ENCODE measurements at regions of chr6 and their contacts with region 1.

Region 1: GRCh38 chr6:8187209-8187608 is 84.9 kb upstream of the EEF1E1 start:
- DNase-seq: no peak
- H3K4me3 ChIP-seq: no peak overlapping the region
- H3K27ac ChIP-seq: no peak overlapping the region
- H3K4me1 ChIP-seq: no peaks in the 10 kb centered on the region
- H3K27me3 ChIP-seq: no peaks in the 10 kb centered on the region
- CTCF ChIP-seq: no peak
- POLR2A ChIP-seq: no peak

Region 2: DNA sequence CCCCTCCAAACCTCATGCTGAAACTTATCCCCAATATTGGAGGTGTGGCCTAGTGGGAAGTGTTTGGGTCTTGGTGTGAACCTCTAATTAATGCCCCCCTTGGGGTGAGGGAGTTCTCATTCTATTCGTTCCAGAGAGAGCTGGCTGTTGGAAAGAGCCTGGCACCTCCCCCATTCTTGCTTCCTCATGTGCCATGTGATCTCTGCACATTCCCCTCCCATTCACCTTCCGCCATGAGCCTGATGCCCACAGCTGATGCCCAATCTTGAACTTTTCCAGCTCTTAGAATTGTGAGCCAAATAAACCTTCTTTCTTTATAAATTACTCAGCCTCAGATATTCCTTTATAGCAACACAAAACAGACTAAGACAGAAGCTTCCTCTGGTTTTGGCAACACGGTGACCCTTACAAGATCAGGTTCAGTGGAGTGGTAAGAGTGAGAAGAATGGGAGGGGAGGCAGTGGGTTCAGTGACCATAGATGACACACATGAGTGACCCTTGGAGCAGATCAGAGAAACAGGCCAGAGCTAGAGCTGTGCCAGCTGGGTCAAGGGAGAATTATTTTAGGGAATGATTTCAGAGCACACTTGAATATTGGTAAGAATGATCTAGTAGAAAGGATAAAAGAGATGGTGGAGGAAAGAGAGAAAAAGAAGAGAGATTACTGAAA is 1422.3 kb before region 1 on chr6:
- intact Hi-C with region 1: loop called (anchors 5 kb)
- DNase-seq: no peak
- H3K4me3 ChIP-seq: no peak overlapping the region
- H3K27ac ChIP-seq: no peak overlapping the region
- H3K4me1 ChIP-seq: no peaks in the 10 kb centered on the region
- H3K27me3 ChIP-seq: no peaks in the 10 kb centered on the region
- CTCF ChIP-seq: no peak
- POLR2A ChIP-seq: no peak

Region 3: DNA sequence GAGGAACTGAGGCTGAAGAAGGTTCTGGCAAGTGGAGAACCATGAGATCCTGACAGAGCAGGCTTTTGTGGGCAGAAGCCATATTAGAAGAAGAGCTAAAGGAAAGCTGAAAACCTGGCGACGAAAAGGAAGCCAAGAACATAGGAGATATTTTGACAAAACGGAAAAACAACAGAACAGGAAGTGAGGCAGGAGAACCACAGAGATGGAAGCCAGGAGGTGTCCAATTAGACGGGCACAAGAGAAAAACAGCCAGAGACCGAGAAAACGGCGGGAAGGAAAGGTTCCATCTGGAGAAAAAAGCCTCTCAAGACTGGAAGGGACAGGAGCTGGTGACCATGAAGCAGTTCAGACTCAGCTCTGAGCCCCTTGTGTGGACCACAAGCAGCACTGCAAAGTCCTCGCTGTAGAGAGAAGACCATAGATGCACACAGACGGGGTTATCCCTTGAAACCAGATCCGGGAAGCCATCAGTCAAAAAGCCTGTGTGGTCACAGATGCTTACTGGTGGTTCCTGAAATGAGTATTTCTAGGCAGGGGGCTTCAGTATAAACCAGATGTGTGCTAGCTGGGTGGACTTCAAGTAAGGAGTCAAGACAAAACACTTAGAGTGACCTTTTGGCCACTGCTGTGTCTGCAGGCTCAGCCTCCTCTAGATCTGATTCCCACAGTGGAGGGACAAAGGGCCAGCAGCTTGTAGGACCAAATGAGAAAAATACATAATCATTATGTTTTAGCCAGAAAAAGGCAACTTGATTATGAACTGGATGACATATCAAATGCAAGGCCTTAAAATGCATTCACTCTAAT is 904.9 kb before region 1 on chr6:
- intact Hi-C with region 1: no loop called
- DNase-seq: no peak
- H3K4me3 ChIP-seq: no peak overlapping the region
- H3K27ac ChIP-seq: no peak overlapping the region
- H3K4me1 ChIP-seq: no peaks in the 10 kb centered on the region
- H3K27me3 ChIP-seq: no peaks in the 10 kb centered on the region
- CTCF ChIP-seq: no peak
- POLR2A ChIP-seq: no peak

Measured in breast epithelium (tissue), 4 donors.